ENCODE measurements at regions of chr13 and their contacts with region 1.

Region 1: GRCh38 chr13:46721054-46721453 is 75.9 kb downstream of the ESD start:
- DNase-seq: peak; percentile 53 to 78 (median 68)
- H3K4me3 ChIP-seq: no peak overlapping the region
- H3K27ac ChIP-seq: no peak overlapping the region
- H3K4me1 ChIP-seq: peaks cover 0 to 28% (median 17%) of the 10 kb centered on the region in 4 experiments
- H3K27me3 ChIP-seq: no peaks in the 10 kb centered on the region

Region 2: GRCh38 chr13:46492946-46493345 is 228.1 kb before region 1 on chr13:
- CTCF ChIA-PET with region 1: interaction called, 59 read pairs
- POLR2A ChIA-PET with region 1: no interaction called
- DNase-seq: peak; percentile 46 to 67 (median 53)
- H3K4me3 ChIP-seq: no peak overlapping the region
- H3K27ac ChIP-seq: no peak overlapping the region
- H3K4me1 ChIP-seq: no peaks in the 10 kb centered on the region
- H3K27me3 ChIP-seq: no peaks in the 10 kb centered on the region

Measured in common myeloid progenitor, CD34-positive (primary cell).